ENCODE measurements at regions of chr11 and their contacts with region 1.

Region 1: DNA sequence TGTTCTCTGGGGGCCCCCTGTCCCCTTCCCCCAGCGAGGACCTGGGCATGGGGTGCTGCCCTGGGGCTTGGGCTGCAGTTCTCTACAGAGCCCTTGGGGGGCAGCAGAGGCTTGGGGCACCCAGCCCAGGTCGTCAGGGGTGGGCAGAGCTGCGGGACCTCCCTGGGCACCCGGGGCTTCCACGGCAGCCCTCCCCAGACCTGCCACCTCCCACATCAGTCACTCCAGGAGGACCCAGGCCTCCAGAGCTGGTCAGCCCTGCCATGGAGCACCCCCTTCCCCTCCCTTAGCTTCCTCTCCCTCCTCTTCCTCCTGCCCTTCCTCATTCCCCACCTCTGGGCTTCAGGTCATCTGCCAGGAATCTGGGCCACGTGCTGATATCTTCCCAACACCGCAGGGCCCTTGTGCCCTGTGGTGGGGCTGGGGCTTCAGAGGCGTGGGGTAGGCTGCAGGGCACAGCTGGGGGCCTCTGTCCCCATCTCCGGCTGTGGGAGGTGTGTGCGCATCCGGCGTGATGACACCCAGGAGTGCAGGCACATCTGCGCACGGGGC is 5.8 kb downstream of the TSPAN4 start:
- DNase-seq: peak in 1 of 2 experiments; percentile 85
- H3K4me3 ChIP-seq: peak overlapping the region in 1 of 4 experiments; percentile 60; a peak in 3 of 8 replicates
- H3K27ac ChIP-seq: no peak overlapping the region
- H3K4me1 ChIP-seq: peaks cover 0 to 47% (median 32%) of the 10 kb centered on the region in 4 experiments; a peak in 6 of 7 replicates
- H3K27me3 ChIP-seq: peaks cover 0 to 2% (median 0%) of the 10 kb centered on the region in 4 experiments; a peak in 4 of 7 replicates
- CTCF ChIP-seq: peak in 2 of 3 experiments; percentile 76 to 79; a peak in 3 of 4 replicates
- EP300 ChIP-seq: no peak
- POLR2A ChIP-seq: no peak
- RAD21 ChIP-seq: peak; percentile 65 to 77

Region 2: GRCh38 chr11:447923-448731 is 400.3 kb before region 1 on chr11:
- CTCF ChIA-PET with region 1: no interaction called
- POLR2A ChIA-PET with region 1: no interaction called
- DNase-seq: peak; percentile 69 to 99
- H3K4me3 ChIP-seq: peak overlapping the region; percentile 31 to 89 (median 76)
- H3K27ac ChIP-seq: peak overlapping the region; percentile 79; the same call in 1 of the 2 replicates
- H3K4me1 ChIP-seq: peaks cover 0 to 12% (median 5%) of the 10 kb centered on the region in 4 experiments; a peak in 5 of 7 replicates
- H3K27me3 ChIP-seq: no peaks in the 10 kb centered on the region
- CTCF ChIP-seq: peak in 2 of 3 experiments; percentile 62 to 80; a peak in 3 of 4 replicates
- EP300 ChIP-seq: no peak
- POLR2A ChIP-seq: peak in 1 of 2 experiments; percentile 57; a peak in 2 of 3 replicates
- RAD21 ChIP-seq: peak; percentile 60 to 69

Region 3: GRCh38 chr11:837189-837989 is 11.1 kb before region 1 on chr11:
- CTCF ChIA-PET with region 1: interaction called, 17 read pairs
- POLR2A ChIA-PET with region 1: interaction called, 1,917 read pairs
- DNase-seq: no peak
- H3K4me3 ChIP-seq: no peak overlapping the region
- H3K27ac ChIP-seq: no peak overlapping the region
- H3K4me1 ChIP-seq: peaks cover 0 to 23% (median 17%) of the 10 kb centered on the region in 4 experiments; a peak in 6 of 7 replicates
- H3K27me3 ChIP-seq: peaks cover 0 to under 1% (median under 1%) of the 10 kb centered on the region in 4 experiments; a peak in 2 of 7 replicates
- CTCF ChIP-seq: no peak
- EP300 ChIP-seq: no peak
- POLR2A ChIP-seq: no peak
- RAD21 ChIP-seq: no peak

Region 4: GRCh38 chr11:870127-870413 is 21.6 kb after region 1 on chr11:
- CTCF ChIA-PET with region 1: interaction called, 35 read pairs
- POLR2A ChIA-PET with region 1: interaction called, 7 read pairs
- DNase-seq: no peak
- H3K4me3 ChIP-seq: no peak overlapping the region
- H3K27ac ChIP-seq: no peak overlapping the region
- H3K4me1 ChIP-seq: peaks cover 0 to 11% (median 7%) of the 10 kb centered on the region in 4 experiments; a peak in 5 of 7 replicates
- H3K27me3 ChIP-seq: no peaks in the 10 kb centered on the region
- CTCF ChIP-seq: peak in 2 of 3 experiments; percentile 31 to 38; a peak in 2 of 4 replicates
- EP300 ChIP-seq: no peak
- POLR2A ChIP-seq: no peak
- RAD21 ChIP-seq: peak in 1 of 2 experiments; percentile 24; a peak in 2 of 4 replicates

Region 5: GRCh38 chr11:890794-891540 is 42.5 kb after region 1 on chr11:
- CTCF ChIA-PET with region 1: interaction called, 20 read pairs
- POLR2A ChIA-PET with region 1: interaction called, 8 read pairs
- DNase-seq: no peak
- H3K4me3 ChIP-seq: no peak overlapping the region
- H3K27ac ChIP-seq: no peak overlapping the region
- H3K4me1 ChIP-seq: peaks cover 0 to 5% (median 3%) of the 10 kb centered on the region in 4 experiments; a peak in 4 of 7 replicates
- H3K27me3 ChIP-seq: no peaks in the 10 kb centered on the region
- CTCF ChIP-seq: no peak
- EP300 ChIP-seq: no peak
- POLR2A ChIP-seq: no peak
- RAD21 ChIP-seq: no peak